ENCODE measurements at regions of chr11 and their contacts with region 1.

Region 1: GRCh38 chr11:130434521-130435223 is 6.3 kb upstream of the ADAMTS8 start:
- DNase-seq: peak; percentile 47 to 63
- ATAC-seq: peak; percentile 86 to 92
- H3K4me3 ChIP-seq: peak overlapping the region; percentile 50 to 73 (median 58)
- H3K27ac ChIP-seq: peak overlapping the region; percentile 47 to 70 (median 58)
- H3K4me1 ChIP-seq: peaks cover 3 to 13% of the 10 kb centered on the region in 2 donors
- H3K27me3 ChIP-seq: no peaks in the 10 kb centered on the region
- CTCF ChIP-seq: peak; percentile 66 to 89 (median 84)
- POLR2A ChIP-seq: no peak

Region 2: GRCh38 chr11:130671801-130672700 is 237.4 kb after region 1 on chr11:
- in situ Hi-C with region 1: loop called in 2 of 4 experiments (anchors 10 to 25 kb)
- intact Hi-C with region 1: loop called (anchors 5 kb)
- DNase-seq: peak; percentile 16 to 41
- ATAC-seq: peak; percentile 13 to 45
- H3K4me3 ChIP-seq: no peak overlapping the region
- H3K27ac ChIP-seq: peak overlapping the region; percentile 12 to 56 (median 27)
- H3K4me1 ChIP-seq: peaks cover 50 to 51% of the 10 kb centered on the region in 2 donors
- H3K27me3 ChIP-seq: no peaks in the 10 kb centered on the region
- CTCF ChIP-seq: no peak
- POLR2A ChIP-seq: no peak

Region 3: GRCh38 chr11:130719220-130719915 is 284.7 kb after region 1 on chr11:
- in situ Hi-C with region 1: no loop called
- intact Hi-C with region 1: loop called (anchors 5 kb)
- DNase-seq: no peak
- ATAC-seq: no peak
- H3K4me3 ChIP-seq: no peak overlapping the region
- H3K27ac ChIP-seq: no peak overlapping the region
- H3K4me1 ChIP-seq: no peaks in the 10 kb centered on the region
- H3K27me3 ChIP-seq: peaks cover 0 to 21% (median 6%) of the 10 kb centered on the region in 3 donors
- CTCF ChIP-seq: no peak
- POLR2A ChIP-seq: no peak

Region 4: DNA sequence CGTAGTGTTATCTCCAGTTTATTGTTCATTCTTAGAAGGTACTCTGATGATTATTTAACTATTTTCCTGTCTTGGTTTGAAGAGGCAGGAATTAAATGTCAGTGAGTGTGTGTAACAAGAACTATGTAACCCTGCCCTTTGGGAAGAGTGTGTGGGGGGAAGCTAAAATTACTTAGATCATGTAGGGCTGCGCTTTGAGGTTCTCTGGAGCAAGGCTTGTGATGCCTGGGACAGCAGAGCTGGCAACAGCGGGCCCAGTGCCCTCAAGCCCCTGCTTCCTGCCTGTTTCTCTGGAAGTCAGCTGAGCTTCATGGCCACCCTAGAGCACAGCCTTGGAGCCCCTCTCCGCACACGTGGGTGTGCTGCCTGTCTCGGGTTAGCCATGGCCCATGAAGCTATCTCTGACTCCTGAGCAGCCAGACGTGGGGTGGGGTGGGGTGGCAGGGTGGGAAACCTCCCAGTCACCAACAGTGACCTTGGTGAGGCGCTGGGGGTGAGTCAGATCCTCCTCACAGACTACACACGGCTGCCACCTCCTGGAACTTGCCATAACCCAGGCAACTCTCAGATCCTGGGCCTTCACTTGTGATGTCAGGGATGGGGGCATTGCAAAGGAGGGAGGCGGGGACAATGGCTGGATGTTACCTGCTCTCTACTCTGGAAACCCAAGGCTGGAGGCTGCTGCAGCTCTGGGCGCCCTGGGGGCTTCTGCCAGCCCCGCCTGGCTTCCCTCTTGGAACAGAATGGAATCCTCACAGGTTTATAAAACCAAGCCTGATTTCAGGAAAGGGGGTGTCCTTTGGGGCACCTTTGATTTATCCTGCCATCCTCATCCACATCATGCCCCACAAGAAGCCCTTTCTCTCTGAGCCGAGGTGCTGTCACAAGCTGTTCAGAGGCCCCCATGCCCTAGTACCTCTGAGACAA is 393.0 kb after region 1 on chr11:
- in situ Hi-C with region 1: no loop called
- intact Hi-C with region 1: loop called (anchors 1 kb)
- DNase-seq: peak; percentile 20 to 53
- ATAC-seq: peak; percentile 36 to 72
- H3K4me3 ChIP-seq: no peak overlapping the region
- H3K27ac ChIP-seq: peak overlapping the region in 1 of 4 donors; percentile 61
- H3K4me1 ChIP-seq: peaks cover 42 to 47% of the 10 kb centered on the region in 2 donors
- H3K27me3 ChIP-seq: no peaks in the 10 kb centered on the region
- CTCF ChIP-seq: peak in 2 of 5 experiments; percentile 20 to 37
- POLR2A ChIP-seq: no peak

Region 5: GRCh38 chr11:130861902-130862860 is 427.5 kb after region 1 on chr11:
- in situ Hi-C with region 1: loop called (anchors 5 to 10 kb)
- intact Hi-C with region 1: loop called (anchors 1 kb)
- DNase-seq: peak; percentile 76 to 82
- ATAC-seq: peak; percentile 49 to 57
- H3K4me3 ChIP-seq: no peak overlapping the region
- H3K27ac ChIP-seq: peak overlapping the region; percentile 24 to 67 (median 62)
- H3K4me1 ChIP-seq: peaks cover 38 to 55% of the 10 kb centered on the region in 2 donors
- H3K27me3 ChIP-seq: no peaks in the 10 kb centered on the region
- CTCF ChIP-seq: peak; percentile 100
- POLR2A ChIP-seq: no peak

Region 6: DNA sequence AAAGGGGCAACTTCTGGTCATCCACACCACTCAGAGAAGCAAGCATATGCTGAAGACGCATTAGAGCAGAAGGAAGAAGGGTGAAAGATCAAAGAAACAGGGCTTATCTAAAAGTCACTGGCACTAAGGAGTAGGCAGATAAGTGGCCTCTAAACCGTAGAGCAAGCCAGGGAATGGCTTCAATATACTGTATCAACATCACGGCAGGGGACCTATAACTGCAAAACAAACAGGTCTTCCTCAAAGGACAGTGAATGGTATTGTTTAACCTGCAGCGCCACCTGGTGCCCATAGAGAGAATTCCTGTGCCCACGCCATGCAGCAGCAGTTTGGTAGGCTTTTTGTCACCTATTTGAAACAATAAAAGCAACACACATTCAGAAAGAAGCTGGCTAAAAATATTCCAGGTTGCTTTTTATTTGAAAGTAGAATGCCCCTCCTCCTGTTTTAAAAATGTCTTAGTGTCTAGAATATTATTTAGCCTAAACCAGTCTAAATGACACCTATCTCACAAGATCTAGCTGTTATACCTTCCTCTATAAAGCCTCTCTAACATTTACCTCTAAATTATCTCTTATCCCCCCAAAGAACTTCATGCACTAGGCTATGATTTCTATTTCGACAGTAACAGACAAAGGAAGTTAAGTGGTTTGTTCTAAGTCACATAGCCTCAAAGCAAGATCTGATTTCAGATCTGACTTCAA is 459.8 kb after region 1 on chr11:
- in situ Hi-C with region 1: loop called in 3 of 4 experiments (anchors 10 kb)
- intact Hi-C with region 1: loop called (anchors 1 kb)
- DNase-seq: peak; percentile 34 to 62
- ATAC-seq: peak; percentile 62 to 68
- H3K4me3 ChIP-seq: no peak overlapping the region
- H3K27ac ChIP-seq: no peak overlapping the region
- H3K4me1 ChIP-seq: peaks cover 31 to 36% of the 10 kb centered on the region in 2 donors
- H3K27me3 ChIP-seq: no peaks in the 10 kb centered on the region
- CTCF ChIP-seq: peak; percentile 74 to 89 (median 83)
- POLR2A ChIP-seq: no peak